Body of pancreas (tissue), 4 donors: ENCODE measurements at regions of chr22 and their contacts with region 1.

Region 1: DNA sequence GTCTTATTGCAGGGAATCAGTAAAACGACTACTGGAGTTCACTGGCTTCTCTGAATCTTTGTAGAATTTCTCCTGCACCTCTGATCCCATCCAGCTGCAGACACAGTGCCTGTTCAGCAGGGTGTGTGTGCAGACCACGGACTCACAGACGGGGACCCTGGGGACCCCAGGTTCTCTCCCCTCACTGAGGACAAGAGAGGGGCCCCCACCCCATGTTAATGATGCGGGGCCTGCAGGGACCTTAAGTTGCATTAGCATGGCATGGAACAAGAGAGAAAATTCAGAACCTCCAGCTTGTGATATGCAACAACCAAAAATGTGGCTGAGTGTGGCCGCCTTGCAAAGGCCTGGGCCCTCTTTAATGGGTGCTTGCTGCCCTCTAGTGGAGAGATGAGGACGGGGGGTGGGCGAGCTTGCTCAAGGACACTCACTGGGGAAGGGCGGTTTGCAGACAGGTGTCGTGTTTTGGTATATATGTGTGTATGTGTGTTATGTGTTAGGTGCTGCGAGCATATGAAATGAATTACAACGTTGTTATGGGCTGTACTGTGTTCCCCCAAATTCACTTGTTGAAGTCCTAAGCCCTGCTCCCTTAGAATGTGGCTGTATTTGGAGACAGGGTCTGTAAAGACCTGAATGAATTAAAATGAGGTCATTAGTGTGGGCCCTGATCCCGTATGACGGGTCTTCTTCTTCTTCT is 84.4 kb upstream of the SEPTIN5 start:
- DNase-seq: peak; percentile 78 to 84 (median 80)
- ATAC-seq: peak; percentile 85
- H3K4me3 ChIP-seq: no peak overlapping the region
- H3K27ac ChIP-seq: no peak overlapping the region
- H3K4me1 ChIP-seq: no peaks in the 10 kb centered on the region
- H3K27me3 ChIP-seq: no peaks in the 10 kb centered on the region
- CTCF ChIP-seq: peak; percentile 79 to 94 (median 88)
- POLR2A ChIP-seq: no peak

Region 2: GRCh38 chr22:18954990-18955571 is 674.8 kb before region 1 on chr22:
- intact Hi-C with region 1: loop called (anchors 5 kb)
- DNase-seq: peak in 1 of 4 donors; percentile 12
- ATAC-seq: no peak
- H3K4me3 ChIP-seq: no peak overlapping the region
- H3K27ac ChIP-seq: no peak overlapping the region
- H3K4me1 ChIP-seq: no peaks in the 10 kb centered on the region
- H3K27me3 ChIP-seq: no peaks in the 10 kb centered on the region
- CTCF ChIP-seq: no peak
- POLR2A ChIP-seq: no peak

Region 3: DNA sequence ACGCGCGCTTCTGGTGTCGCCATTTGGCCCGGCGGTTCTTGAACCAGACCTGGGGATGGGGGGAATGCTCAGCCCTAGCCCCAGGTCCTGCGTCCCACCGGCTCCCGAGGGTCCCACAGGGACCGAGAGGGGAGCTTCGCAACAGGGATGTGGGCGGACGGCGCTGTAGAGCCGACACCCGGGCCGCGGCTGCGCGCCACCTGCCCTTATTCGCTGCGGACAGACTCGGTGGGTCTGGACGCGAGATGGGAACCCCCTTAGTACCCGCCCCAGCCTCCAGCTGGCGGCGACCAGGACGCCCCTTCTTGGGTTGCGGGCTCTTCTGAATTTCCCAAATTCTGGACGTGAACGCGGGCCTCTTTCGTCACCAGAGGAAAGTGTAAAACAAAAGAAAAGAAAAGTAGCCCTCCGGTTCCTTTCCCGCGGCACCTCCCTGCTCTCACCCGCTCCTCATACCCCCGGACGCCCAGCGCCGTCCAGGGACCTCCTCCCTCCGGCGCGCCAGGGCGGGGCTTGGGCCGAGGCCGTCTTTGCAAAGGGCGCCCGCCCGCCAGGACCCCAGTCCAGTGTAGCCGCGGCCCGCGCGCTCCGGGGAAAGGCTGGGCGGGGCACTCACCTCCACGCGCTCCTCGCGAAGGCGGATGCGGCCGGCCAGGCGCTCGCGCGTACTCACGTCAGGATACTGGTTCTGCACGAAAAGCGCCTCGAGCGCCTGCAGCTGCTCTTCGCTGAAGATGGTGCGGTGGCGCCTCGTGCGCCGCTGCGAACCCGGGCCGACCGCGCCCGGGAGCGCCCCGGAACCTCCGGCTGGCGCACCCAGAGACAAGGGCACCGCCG is 480.6 kb before region 1 on chr22:
- intact Hi-C with region 1: loop called (anchors 5 kb)
- DNase-seq: no peak
- ATAC-seq: no peak
- H3K4me3 ChIP-seq: no peak overlapping the region
- H3K27ac ChIP-seq: no peak overlapping the region
- H3K4me1 ChIP-seq: peaks cover 9% of the 10 kb centered on the region
- H3K27me3 ChIP-seq: peaks cover 0 to 21% of the 10 kb centered on the region in 2 donors
- CTCF ChIP-seq: no peak
- POLR2A ChIP-seq: no peak